Vagina (tissue), 2 donors: ENCODE measurements at regions of chr1 and their contacts with region 1.

Region 1: DNA sequence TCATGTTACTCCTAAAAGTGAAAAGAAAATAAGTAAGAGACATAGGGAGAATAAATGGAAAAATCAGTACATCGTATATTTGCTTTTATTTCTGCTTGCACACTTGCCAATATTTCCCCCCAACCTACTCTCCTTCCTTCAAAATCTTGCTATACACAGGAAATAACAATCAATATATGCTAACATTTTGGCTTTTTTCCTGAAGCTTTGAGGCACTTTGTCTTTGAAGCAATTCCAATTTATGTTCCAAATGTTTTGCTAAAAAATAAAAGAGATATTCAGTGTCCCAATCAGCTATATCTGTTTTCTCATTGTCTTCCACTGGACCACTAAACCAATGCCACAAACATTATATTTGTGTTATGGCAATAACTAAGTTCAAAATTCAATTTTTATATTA is 184.0 kb upstream of the NEGR1 start:
- DNase-seq: no peak
- H3K4me3 ChIP-seq: no peak overlapping the region
- H3K27ac ChIP-seq: no peak overlapping the region
- H3K4me1 ChIP-seq: no peaks in the 10 kb centered on the region
- H3K27me3 ChIP-seq: no peaks in the 10 kb centered on the region
- CTCF ChIP-seq: no peak
- POLR2A ChIP-seq: no peak

Region 2: DNA sequence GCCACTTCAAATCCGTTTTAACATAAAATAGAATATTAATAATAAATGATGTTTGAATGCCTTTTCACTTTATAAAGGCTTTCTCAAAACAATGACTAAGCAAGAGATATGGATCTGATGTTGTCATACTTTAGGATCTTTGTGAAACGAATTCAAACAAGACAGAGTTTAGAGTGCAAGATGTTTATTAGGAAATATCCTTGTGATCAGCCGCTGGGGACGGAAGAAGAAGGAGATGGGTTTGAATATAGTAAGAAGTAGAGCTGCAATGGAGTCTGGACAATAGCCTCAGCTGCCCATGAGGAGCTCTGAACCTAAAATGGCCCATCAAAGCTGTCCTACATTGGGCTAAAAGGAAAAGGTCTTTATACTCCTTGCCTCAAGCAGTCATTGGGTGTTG is 535.8 kb before region 1 on chr1:
- intact Hi-C with region 1: loop called (anchors 5 kb)
- DNase-seq: no peak
- H3K4me3 ChIP-seq: no peak overlapping the region
- H3K27ac ChIP-seq: no peak overlapping the region
- H3K4me1 ChIP-seq: no peaks in the 10 kb centered on the region
- H3K27me3 ChIP-seq: no peaks in the 10 kb centered on the region
- CTCF ChIP-seq: no peak
- POLR2A ChIP-seq: no peak

Region 3: GRCh38 chr1:72439036-72439435 is 27.3 kb before region 1 on chr1:
- intact Hi-C with region 1: no loop called
- DNase-seq: no peak
- H3K4me3 ChIP-seq: no peak overlapping the region
- H3K27ac ChIP-seq: no peak overlapping the region
- H3K4me1 ChIP-seq: no peaks in the 10 kb centered on the region
- H3K27me3 ChIP-seq: no peaks in the 10 kb centered on the region
- CTCF ChIP-seq: no peak
- POLR2A ChIP-seq: no peak